ENCODE measurements at regions of chr1 and their contacts with region 1.

Region 1: DNA sequence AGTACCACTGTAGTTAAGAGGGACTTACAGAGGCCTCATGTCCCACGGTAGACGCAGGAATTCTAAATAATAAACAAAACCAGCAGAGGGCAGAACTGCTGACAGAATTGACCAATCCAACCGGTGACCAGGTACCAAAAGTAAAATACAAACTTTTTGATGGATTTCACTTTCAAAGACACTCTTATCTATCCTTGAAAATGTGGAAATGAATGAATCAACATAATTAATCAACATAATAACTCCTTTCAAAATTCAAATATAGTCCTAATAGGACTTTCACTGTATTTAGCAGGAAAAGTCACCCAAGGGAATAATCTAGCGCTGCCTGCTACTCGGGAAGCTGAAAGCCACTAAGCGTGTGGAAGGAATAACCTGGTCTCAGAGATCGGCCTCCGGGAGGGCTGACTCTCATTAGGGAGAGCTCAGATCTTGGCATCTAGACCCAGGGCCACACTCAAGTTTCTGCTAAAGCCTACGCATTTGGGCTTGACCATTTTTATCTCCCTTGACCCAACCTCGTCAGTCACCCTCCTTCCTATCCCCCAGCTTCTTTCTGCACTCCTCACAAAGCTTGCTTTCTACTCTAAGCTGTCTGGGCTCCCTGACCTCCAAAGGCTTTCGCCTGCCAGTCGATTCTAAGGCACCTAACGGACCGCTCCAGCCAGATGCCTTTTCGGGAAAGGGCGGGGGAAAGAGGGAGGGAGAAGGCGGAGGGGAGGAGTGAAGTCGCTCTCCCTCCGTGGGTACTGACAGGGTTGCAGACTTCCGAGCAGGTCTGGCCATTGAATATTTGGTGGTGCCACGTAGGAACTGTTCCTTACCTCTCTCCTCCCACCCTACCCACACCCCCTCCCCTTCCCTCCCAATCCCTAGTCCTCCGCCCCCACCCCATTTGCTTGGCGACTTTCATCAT is 1.6 kb downstream of the COL11A1 start:
- DNase-seq: peak in 1 of 2 experiments; percentile 5
- H3K4me3 ChIP-seq: no peak overlapping the region
- H3K27ac ChIP-seq: no peak overlapping the region
- H3K4me1 ChIP-seq: no peaks in the 10 kb centered on the region
- H3K27me3 ChIP-seq: no peaks in the 10 kb centered on the region
- CTCF ChIP-seq: peak; percentile 64

Region 2: GRCh38 chr1:102954576-102954975 is 152.1 kb before region 1 on chr1:
- CTCF ChIA-PET with region 1: no interaction called
- POLR2A ChIA-PET with region 1: no interaction called
- intact Hi-C with region 1: no loop called
- DNase-seq: no peak
- H3K4me3 ChIP-seq: no peak overlapping the region
- H3K27ac ChIP-seq: no peak overlapping the region
- H3K4me1 ChIP-seq: no peaks in the 10 kb centered on the region
- H3K27me3 ChIP-seq: no peaks in the 10 kb centered on the region
- CTCF ChIP-seq: no peak

Region 3: GRCh38 chr1:103063921-103064320 is 42.8 kb before region 1 on chr1:
- CTCF ChIA-PET with region 1: no interaction called
- POLR2A ChIA-PET with region 1: no interaction called
- intact Hi-C with region 1: no loop called
- DNase-seq: no peak
- H3K4me3 ChIP-seq: no peak overlapping the region
- H3K27ac ChIP-seq: no peak overlapping the region
- H3K4me1 ChIP-seq: no peaks in the 10 kb centered on the region
- H3K27me3 ChIP-seq: no peaks in the 10 kb centered on the region
- CTCF ChIP-seq: no peak

Region 4: DNA sequence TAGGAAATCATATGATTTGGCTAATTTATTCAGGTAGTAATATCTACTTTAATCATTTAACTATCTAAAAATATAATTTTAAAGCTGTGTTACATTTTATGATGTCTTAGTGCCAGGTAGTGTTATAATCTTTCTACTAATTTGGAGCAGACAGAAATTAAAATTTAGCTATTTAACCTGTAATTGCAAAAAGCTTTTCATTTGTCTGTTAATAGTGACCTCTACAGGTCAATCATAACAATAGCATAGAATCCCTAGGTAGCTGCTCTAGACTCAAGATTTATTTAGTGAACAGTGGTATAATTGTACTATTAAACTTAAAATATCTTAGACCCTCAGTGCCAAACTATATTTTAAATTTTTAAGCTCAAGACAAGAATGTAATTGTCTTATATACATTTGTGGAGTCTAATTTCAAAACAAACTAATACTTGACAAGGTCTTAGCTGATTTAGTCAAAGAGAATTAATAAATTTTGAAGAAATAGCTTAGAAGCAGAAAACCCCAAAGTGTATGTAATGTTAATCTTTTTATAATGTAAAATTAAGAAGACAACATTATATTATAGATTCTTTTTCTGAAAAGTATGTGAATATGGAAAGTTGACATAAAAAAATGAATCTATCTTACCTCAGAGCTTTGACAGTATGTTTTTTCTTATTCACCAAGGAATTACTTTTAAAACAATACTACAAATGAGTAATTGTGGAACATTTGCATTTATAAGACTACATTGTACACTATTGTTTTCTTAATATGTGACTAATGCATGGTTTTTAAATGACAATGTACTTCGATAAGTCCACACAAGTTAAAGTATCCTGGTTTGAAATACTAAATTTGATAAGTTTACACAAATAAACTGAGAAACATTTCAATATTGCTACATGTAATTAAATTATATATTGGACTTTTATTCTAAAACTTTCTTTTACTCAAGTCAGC is 354.7 kb after region 1 on chr1:
- CTCF ChIA-PET with region 1: interaction called, 14 read pairs
- POLR2A ChIA-PET with region 1: no interaction called
- intact Hi-C with region 1: loop called (anchors 10 kb)
- DNase-seq: no peak
- H3K4me3 ChIP-seq: no peak overlapping the region
- H3K27ac ChIP-seq: no peak overlapping the region
- H3K4me1 ChIP-seq: no peaks in the 10 kb centered on the region
- H3K27me3 ChIP-seq: no peaks in the 10 kb centered on the region
- CTCF ChIP-seq: peak; percentile 83

Measured in PC-9 (cell line).